CD8-positive, alpha-beta T cell (primary cell): ENCODE measurements at regions of chr7 and their contacts with region 1.

Region 1: GRCh38 chr7:1503816-1504775 is at the start of gene INTS1:
- DNase-seq: peak; percentile 78 to 94 (median 90)
- ATAC-seq: peak; percentile 93
- H3K4me3 ChIP-seq: peak within 1 kb of the TSS; percentile 68 to 82
- H3K4me3 Mint-ChIP-seq: peak within 1 kb of the TSS; percentile 88
- H3K27ac ChIP-seq: peak within 1 kb of the TSS in 1 of 2 experiments; percentile 51
- H3K27ac Mint-ChIP-seq: peak within 1 kb of the TSS; percentile 76
- H3K4me1 ChIP-seq: peaks cover 48% of the 10 kb centered on the region
- H3K4me1 Mint-ChIP-seq: peaks cover 46% of the 10 kb centered on the region
- H3K27me3 ChIP-seq: peaks cover 0 to 2% of the 10 kb centered on the region in 2 experiments
- H3K27me3 Mint-ChIP-seq: peaks cover 3% of the 10 kb centered on the region
- CTCF ChIP-seq: peak; percentile 95
- total RNA-seq, gene INTS1: 106 to 113 TPM

Region 2: GRCh38 chr7:405489-406211 is 1098.4 kb before region 1 on chr7:
- CTCF ChIA-PET with region 1: no interaction called
- POLR2A ChIA-PET with region 1: no interaction called
- intact Hi-C with region 1: no loop called
- DNase-seq: peak in 1 of 9 experiments; percentile 4
- ATAC-seq: no peak
- H3K4me3 ChIP-seq: no peak overlapping the region
- H3K4me3 Mint-ChIP-seq: no peak overlapping the region
- H3K27ac ChIP-seq: no peak overlapping the region
- H3K27ac Mint-ChIP-seq: no peak overlapping the region
- H3K4me1 ChIP-seq: no peaks in the 10 kb centered on the region
- H3K4me1 Mint-ChIP-seq: peaks cover 2% of the 10 kb centered on the region
- H3K27me3 ChIP-seq: no peaks in the 10 kb centered on the region
- H3K27me3 Mint-ChIP-seq: peaks cover 6% of the 10 kb centered on the region
- CTCF ChIP-seq: no peak

Region 3: DNA sequence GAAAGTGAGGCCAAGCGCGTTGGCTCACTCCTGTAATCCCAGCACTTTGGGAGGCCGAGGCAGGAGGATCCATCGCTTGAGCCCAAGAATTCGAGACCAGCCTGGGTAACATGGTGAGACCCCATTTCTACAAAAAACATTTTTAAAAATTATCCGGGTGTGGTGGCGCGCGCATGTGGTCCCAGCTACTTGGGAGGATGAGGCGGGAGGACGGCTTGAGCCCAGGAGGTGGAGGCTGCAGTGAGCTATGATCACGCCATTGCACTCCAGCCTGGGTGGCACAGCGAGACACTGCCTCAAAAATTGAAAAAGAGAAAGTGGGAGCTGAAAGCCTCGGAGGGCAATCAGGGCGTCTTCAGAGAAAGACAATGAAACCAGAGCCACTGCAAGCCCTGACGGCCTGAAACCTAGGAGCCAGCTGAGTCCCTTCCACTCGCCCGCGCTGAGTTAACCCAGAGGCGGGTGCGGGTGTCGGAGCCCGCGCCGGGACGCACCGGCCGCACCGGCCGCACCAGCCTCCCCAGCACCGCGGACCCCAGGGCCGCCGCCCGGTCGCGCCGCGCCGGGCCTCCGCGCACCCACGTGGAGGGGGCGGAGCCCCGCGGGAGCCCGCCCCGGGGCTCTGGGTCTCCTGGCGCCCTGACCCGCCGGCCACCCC is 366.5 kb before region 1 on chr7:
- CTCF ChIA-PET with region 1: no interaction called
- POLR2A ChIA-PET with region 1: no interaction called
- intact Hi-C with region 1: loop called in 1 of 2 experiments (anchors 2 kb)
- DNase-seq: no peak
- ATAC-seq: peak; percentile 62
- H3K4me3 ChIP-seq: peak overlapping the region; percentile 77 to 78
- H3K4me3 Mint-ChIP-seq: peak overlapping the region; percentile 90
- H3K27ac ChIP-seq: peak overlapping the region; percentile 81 to 91
- H3K27ac Mint-ChIP-seq: peak overlapping the region; percentile 88
- H3K4me1 ChIP-seq: peaks cover 14% of the 10 kb centered on the region
- H3K4me1 Mint-ChIP-seq: peaks cover 17% of the 10 kb centered on the region
- H3K27me3 ChIP-seq: no peaks in the 10 kb centered on the region
- H3K27me3 Mint-ChIP-seq: no peaks in the 10 kb centered on the region
- CTCF ChIP-seq: no peak

Region 4: DNA sequence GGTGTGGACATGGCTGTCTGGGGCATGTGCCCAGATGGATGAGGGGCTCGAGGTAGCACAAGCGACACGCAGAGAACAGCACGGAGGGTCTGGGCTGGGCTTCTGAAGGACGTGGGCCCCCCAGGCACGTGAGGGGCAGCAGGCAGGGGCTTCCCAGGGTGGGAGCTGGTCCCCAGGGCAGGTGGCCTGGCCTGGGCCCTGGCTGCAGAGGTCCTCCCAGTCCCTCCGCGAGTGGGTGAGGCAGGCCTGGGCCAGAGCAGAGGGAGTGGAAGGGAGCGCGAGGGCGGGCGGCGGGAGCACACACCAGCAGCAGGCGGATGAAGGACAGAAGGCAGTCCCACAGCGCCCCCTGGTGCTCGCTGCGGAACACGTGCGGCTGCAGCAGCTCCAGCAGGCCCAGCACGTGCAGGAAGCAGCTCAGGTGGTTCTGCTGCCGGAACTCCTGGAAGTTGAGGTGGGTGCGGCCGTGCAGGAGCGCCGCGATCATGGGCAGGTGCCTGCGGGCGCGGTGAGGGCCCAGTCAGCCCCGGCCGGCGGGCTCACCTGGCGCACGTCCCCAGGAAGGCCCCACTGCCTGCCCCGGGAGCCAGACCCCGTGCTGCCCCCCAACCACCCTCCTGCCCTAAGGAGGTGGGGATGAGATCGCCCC is 30.1 kb before region 1 on chr7:
- CTCF ChIA-PET with region 1: interaction called, 7 read pairs
- POLR2A ChIA-PET with region 1: no interaction called
- intact Hi-C with region 1: loop called in 1 of 2 experiments (anchors 1 kb)
- DNase-seq: peak; percentile 73 to 92 (median 87)
- ATAC-seq: peak; percentile 95
- H3K4me3 ChIP-seq: no peak overlapping the region
- H3K4me3 Mint-ChIP-seq: no peak overlapping the region
- H3K27ac ChIP-seq: no peak overlapping the region
- H3K27ac Mint-ChIP-seq: no peak overlapping the region
- H3K4me1 ChIP-seq: peaks cover 11% of the 10 kb centered on the region
- H3K4me1 Mint-ChIP-seq: peaks cover 6% of the 10 kb centered on the region
- H3K27me3 ChIP-seq: no peaks in the 10 kb centered on the region
- H3K27me3 Mint-ChIP-seq: no peaks in the 10 kb centered on the region
- CTCF ChIP-seq: peak; percentile 91

Region 5: GRCh38 chr7:1548438-1548831 is 44.3 kb after region 1 on chr7:
- CTCF ChIA-PET with region 1: interaction called, 3 read pairs
- POLR2A ChIA-PET with region 1: no interaction called
- intact Hi-C with region 1: loop called in 1 of 2 experiments (anchors 5 kb)
- DNase-seq: peak in 1 of 9 experiments; percentile 23
- ATAC-seq: no peak
- H3K4me3 ChIP-seq: no peak overlapping the region
- H3K4me3 Mint-ChIP-seq: no peak overlapping the region
- H3K27ac ChIP-seq: no peak overlapping the region
- H3K27ac Mint-ChIP-seq: no peak overlapping the region
- H3K4me1 ChIP-seq: no peaks in the 10 kb centered on the region
- H3K4me1 Mint-ChIP-seq: peaks cover 3% of the 10 kb centered on the region
- H3K27me3 ChIP-seq: no peaks in the 10 kb centered on the region
- H3K27me3 Mint-ChIP-seq: no peaks in the 10 kb centered on the region
- CTCF ChIP-seq: no peak

Region 6: GRCh38 chr7:1569833-1570633 is 65.9 kb after region 1 on chr7 and contains the start of gene PSMG3:
- CTCF ChIA-PET with region 1: interaction called, 3 read pairs
- POLR2A ChIA-PET with region 1: no interaction called
- intact Hi-C with region 1: loop called (anchors 1 kb)
- DNase-seq: peak; percentile 77 to 93 (median 88)
- ATAC-seq: peak; percentile 87
- H3K4me3 ChIP-seq: peak within 1 kb of the TSS; percentile 64 to 95
- H3K4me3 Mint-ChIP-seq: peak within 1 kb of the TSS; percentile 87
- H3K27ac ChIP-seq: peak within 1 kb of the TSS; percentile 69 to 90
- H3K27ac Mint-ChIP-seq: peak within 1 kb of the TSS; percentile 91
- H3K4me1 ChIP-seq: peaks cover 16% of the 10 kb centered on the region
- H3K4me1 Mint-ChIP-seq: peaks cover 29% of the 10 kb centered on the region
- H3K27me3 ChIP-seq: no peaks in the 10 kb centered on the region
- H3K27me3 Mint-ChIP-seq: no peaks in the 10 kb centered on the region
- CTCF ChIP-seq: no peak
- total RNA-seq, gene PSMG3: 20.9 to 21.0 TPM

Region 7: DNA sequence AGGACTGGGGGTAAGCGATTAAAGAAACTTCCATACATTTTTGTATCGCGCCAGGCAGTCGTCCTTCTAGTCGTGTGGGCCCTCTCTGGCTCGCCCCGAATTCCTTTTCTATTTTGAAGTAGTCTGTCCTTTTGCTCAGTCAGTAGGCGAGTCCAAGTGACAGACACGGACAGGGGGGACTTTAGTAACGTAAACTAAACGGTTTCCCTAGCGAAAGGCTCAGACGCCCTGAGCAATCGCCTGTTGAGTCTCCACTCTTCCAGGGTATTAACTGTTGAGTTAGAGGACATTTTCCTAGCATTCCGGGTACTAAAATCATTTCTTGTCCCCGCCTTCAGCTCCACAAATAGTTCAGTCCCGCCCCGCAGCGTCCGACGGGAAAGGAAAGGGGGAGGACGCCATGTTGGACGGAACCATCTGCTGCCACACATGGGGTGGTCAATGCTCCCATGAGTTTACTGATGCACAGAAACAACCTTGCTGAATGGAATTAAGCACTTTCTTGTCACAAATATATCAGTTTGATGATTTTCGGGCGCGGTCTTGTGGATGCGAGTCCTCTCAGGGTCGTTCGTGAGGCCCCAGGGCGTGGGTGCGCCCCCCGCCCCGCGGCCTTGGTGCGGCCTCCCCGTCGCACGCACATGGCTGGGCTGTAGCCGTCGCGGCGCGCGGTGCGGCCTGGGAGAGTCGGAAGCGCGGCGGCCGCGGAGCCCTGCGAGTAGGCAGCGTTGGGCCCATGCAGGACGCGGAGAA is 850.3 kb after region 1 on chr7 and contains the start of gene EIF3B:
- CTCF ChIA-PET with region 1: no interaction called
- POLR2A ChIA-PET with region 1: no interaction called
- intact Hi-C with region 1: loop called in 1 of 2 experiments (anchors 1 kb)
- DNase-seq: peak; percentile 80 to 97 (median 90)
- ATAC-seq: peak; percentile 84
- H3K4me3 ChIP-seq: peak within 1 kb of the TSS; percentile 72 to 74
- H3K4me3 Mint-ChIP-seq: peak within 1 kb of the TSS; percentile 88
- H3K27ac ChIP-seq: peak within 1 kb of the TSS; percentile 99
- H3K27ac Mint-ChIP-seq: peak within 1 kb of the TSS; percentile 99
- H3K4me1 ChIP-seq: peaks cover 45% of the 10 kb centered on the region
- H3K4me1 Mint-ChIP-seq: peaks cover 40% of the 10 kb centered on the region
- H3K27me3 ChIP-seq: no peaks in the 10 kb centered on the region
- H3K27me3 Mint-ChIP-seq: no peaks in the 10 kb centered on the region
- CTCF ChIP-seq: no peak
- total RNA-seq, gene EIF3B: 234 to 239 TPM